PC-3 (cell line): ENCODE measurements at regions of chr13 and their contacts with region 1.

Region 1: DNA sequence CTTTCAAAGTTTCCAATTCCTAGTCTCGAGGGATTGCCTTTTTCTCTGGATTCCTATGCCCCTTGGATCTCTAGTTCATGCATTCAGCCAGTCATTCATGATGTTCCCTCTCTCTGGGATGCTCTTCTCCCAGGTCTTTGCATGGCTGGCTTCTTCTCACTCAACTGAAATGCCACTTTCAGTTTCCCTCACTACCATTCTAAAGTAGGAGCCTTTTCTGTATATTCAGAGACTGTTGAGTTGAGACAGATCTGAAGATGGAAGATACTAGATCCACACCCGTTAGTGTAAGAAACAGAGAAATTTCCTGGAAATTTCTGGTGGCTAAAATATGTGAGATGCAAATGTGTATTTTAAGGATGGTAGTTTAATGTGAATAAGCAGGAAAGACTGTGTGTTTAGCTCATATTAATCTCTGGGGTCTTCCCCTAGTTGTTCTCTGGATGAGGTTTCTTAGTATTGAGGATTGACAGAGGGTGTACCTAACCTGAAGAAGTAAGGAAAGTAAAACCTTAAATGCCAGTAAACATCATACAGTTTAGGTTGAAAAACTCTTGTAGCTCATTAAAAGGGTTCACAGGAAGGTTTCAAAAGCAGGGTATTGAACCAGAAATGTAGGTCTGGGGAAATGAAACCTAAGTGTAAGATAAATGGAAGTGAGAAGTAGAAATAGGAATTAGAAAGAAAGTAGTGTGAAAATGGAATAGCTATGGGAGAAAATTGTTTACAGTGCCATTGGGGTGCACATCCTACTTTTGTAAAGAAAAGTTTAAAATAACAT is 331.3 kb downstream of the NDFIP2 start:
- DNase-seq: no peak
- ATAC-seq: no peak
- H3K4me3 ChIP-seq: no peak overlapping the region
- H3K27ac ChIP-seq: no peak overlapping the region
- H3K4me1 ChIP-seq: peaks cover 12% of the 10 kb centered on the region; the same call in 1 of the 2 replicates
- H3K27me3 ChIP-seq: no peaks in the 10 kb centered on the region
- CTCF ChIP-seq: no peak

Region 2: GRCh38 chr13:79796136-79796535 is 16.1 kb before region 1 on chr13:
- CTCF ChIA-PET with region 1: interaction called, 10 read pairs
- POLR2A ChIA-PET with region 1: no interaction called
- intact Hi-C with region 1: no loop called
- DNase-seq: no peak
- ATAC-seq: no peak
- H3K4me3 ChIP-seq: no peak overlapping the region
- H3K27ac ChIP-seq: no peak overlapping the region
- H3K4me1 ChIP-seq: no peaks in the 10 kb centered on the region
- H3K27me3 ChIP-seq: no peaks in the 10 kb centered on the region
- CTCF ChIP-seq: no peak